CD14-positive monocyte (primary cell): ENCODE measurements at regions of chr19 and their contacts with region 1.

Region 1: GRCh38 chr19:10403137-10404021 is at the start of gene CDC37:
- DNase-seq: peak; percentile 97 to 98 (median 98)
- H3K4me3 ChIP-seq: peak within 1 kb of the TSS; percentile 91 to 98 (median 92)
- H3K4me3 Mint-ChIP-seq: peak within 1 kb of the TSS; percentile 94 to 95
- H3K27ac ChIP-seq: peak within 1 kb of the TSS; percentile 73 to 89
- H3K27ac Mint-ChIP-seq: peak within 1 kb of the TSS; percentile 92 to 99 (median 97)
- H3K4me1 ChIP-seq: peaks cover 74 to 81% of the 10 kb centered on the region in 2 donors
- H3K4me1 Mint-ChIP-seq: peaks cover 67% of the 10 kb centered on the region
- H3K27me3 ChIP-seq: peaks cover 3 to 15% of the 10 kb centered on the region in 2 donors
- H3K27me3 Mint-ChIP-seq: peaks cover 15 to 23% (median 17%) of the 10 kb centered on the region in 3 donors
- CTCF ChIP-seq: no peak
- polyA plus RNA-seq, gene CDC37: 49.3 to 575 (median 54.9) TPM

Region 2: GRCh38 chr19:10126213-10126639 is 277.2 kb before region 1 on chr19:
- intact Hi-C with region 1: no loop called
- DNase-seq: peak; percentile 77 to 89 (median 84)
- H3K4me3 ChIP-seq: peak overlapping the region in 1 of 3 experiments; percentile 27
- H3K4me3 Mint-ChIP-seq: peak overlapping the region in 1 of 2 donors; percentile 30
- H3K27ac ChIP-seq: peak overlapping the region; percentile 83 to 84
- H3K27ac Mint-ChIP-seq: peak overlapping the region; percentile 86 to 97 (median 93)
- H3K4me1 ChIP-seq: peaks cover 39 to 47% of the 10 kb centered on the region in 2 donors
- H3K4me1 Mint-ChIP-seq: peaks cover 23% of the 10 kb centered on the region
- H3K27me3 ChIP-seq: no peaks in the 10 kb centered on the region
- H3K27me3 Mint-ChIP-seq: no peaks in the 10 kb centered on the region
- CTCF ChIP-seq: no peak

Region 3: DNA sequence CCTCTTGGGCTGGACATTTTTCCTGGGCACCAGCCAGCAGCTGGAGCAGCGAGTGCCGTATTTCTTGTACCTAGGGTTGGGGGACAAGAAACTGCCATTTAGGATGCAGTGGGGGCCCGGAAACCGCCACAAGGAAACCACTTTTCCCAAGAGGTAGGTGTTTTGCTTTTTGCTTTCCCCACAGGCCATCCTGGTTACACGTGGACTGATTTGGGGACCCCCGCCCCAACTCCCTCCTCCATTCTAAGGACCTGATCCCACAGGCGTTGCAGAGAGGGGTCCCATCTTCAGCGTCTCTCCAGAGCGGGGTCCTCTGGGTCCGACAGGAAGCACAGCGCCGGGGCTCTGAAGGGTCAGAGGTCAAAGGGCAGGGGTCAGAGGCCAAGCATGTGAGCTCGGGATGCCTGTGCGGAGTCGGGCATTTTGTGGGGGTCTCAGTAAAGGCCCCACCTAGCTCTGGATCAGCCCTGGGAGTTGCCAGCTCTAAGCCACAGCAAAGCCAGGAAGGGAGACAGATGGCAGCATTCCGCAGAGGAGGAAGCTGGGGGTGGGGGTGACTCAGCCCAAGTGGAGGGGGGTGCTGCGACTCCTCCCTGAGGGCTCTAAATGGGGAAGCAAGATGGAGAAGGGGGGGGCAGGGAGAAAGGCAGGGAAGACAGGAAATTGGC is 98.1 kb before region 1 on chr19:
- intact Hi-C with region 1: no loop called
- DNase-seq: peak; percentile 79 to 92 (median 84)
- H3K4me3 ChIP-seq: peak overlapping the region; percentile 0 to 68 (median 25)
- H3K4me3 Mint-ChIP-seq: peak overlapping the region; percentile 58 to 81
- H3K27ac ChIP-seq: peak overlapping the region; percentile 55 to 92
- H3K27ac Mint-ChIP-seq: peak overlapping the region; percentile 89 to 97 (median 93)
- H3K4me1 ChIP-seq: peaks cover 32 to 41% of the 10 kb centered on the region in 2 donors
- H3K4me1 Mint-ChIP-seq: peaks cover 32% of the 10 kb centered on the region
- H3K27me3 ChIP-seq: no peaks in the 10 kb centered on the region
- H3K27me3 Mint-ChIP-seq: peaks cover 0 to 12% (median 4%) of the 10 kb centered on the region in 3 donors
- CTCF ChIP-seq: no peak

Region 4: GRCh38 chr19:10332955-10333757 is 70.2 kb before region 1 on chr19 and contains the start of gene RAVER1:
- intact Hi-C with region 1: no loop called
- DNase-seq: peak; percentile 97 to 98 (median 98)
- H3K4me3 ChIP-seq: peak within 1 kb of the TSS; percentile 76 to 96 (median 87)
- H3K4me3 Mint-ChIP-seq: peak within 1 kb of the TSS; percentile 94
- H3K27ac ChIP-seq: peak within 1 kb of the TSS; percentile 74 to 85
- H3K27ac Mint-ChIP-seq: peak within 1 kb of the TSS; percentile 93 to 98 (median 96)
- H3K4me1 ChIP-seq: peaks cover 31 to 46% of the 10 kb centered on the region in 2 donors
- H3K4me1 Mint-ChIP-seq: peaks cover 33% of the 10 kb centered on the region
- H3K27me3 ChIP-seq: no peaks in the 10 kb centered on the region
- H3K27me3 Mint-ChIP-seq: no peaks in the 10 kb centered on the region
- CTCF ChIP-seq: no peak
- polyA plus RNA-seq, gene RAVER1: 6.0 to 20.7 (median 9.0) TPM

Region 5: DNA sequence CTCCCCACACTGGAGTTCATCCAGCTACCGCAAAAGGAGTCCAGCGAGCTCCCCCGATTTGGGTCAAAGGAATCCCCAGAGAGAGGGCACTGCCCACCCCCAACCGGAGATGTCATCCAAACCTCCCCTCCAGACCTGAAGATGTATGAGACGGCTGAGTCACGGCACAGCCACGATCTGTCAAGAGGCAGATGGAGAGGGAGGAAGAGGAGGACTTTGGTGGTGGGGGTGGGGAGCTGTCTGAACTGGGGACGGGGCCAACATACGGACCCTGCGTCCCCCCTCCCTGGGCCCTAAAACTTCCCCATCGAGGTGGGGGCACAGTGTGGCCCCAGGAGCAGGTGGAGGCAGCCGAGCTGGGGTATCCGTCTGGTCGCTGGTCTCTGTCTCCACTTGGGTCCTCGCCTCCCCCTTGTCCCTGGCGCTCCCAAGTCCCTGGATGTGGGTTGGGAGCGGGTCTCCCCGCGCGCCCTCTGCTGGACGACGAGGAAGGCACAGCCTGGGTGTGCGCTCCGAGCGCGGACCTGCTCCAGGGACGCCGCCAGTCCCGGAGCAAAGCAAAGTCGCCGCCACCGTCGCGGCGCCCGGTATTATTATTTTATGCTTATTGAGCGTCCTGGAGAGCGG is 20.7 kb after region 1 on chr19:
- intact Hi-C with region 1: loop called (anchors 2 kb)
- DNase-seq: peak; percentile 83 to 94 (median 85)
- H3K4me3 ChIP-seq: peak overlapping the region; percentile 27 to 71 (median 35)
- H3K4me3 Mint-ChIP-seq: peak overlapping the region; percentile 81 to 90
- H3K27ac ChIP-seq: peak overlapping the region; percentile 60 to 84
- H3K27ac Mint-ChIP-seq: peak overlapping the region; percentile 92 to 99 (median 97)
- H3K4me1 ChIP-seq: peaks cover 87 to 96% of the 10 kb centered on the region in 2 donors
- H3K4me1 Mint-ChIP-seq: peaks cover 89% of the 10 kb centered on the region
- H3K27me3 ChIP-seq: peaks cover 25 to 39% of the 10 kb centered on the region in 2 donors
- H3K27me3 Mint-ChIP-seq: peaks cover 48 to 75% (median 59%) of the 10 kb centered on the region in 3 donors
- CTCF ChIP-seq: peak; percentile 91

Region 6: GRCh38 chr19:10431943-10432735 is 28.8 kb after region 1 on chr19:
- intact Hi-C with region 1: loop called (anchors 1 to 5 kb)
- DNase-seq: peak; percentile 52 to 74 (median 69)
- H3K4me3 ChIP-seq: peak overlapping the region; percentile 43 to 77 (median 51)
- H3K4me3 Mint-ChIP-seq: peak overlapping the region; percentile 87 to 96
- H3K27ac ChIP-seq: peak overlapping the region; percentile 62 to 78
- H3K27ac Mint-ChIP-seq: peak overlapping the region; percentile 88 to 98 (median 96)
- H3K4me1 ChIP-seq: peaks cover 41 to 50% of the 10 kb centered on the region in 2 donors
- H3K4me1 Mint-ChIP-seq: peaks cover 60% of the 10 kb centered on the region
- H3K27me3 ChIP-seq: peaks cover 3 to 33% of the 10 kb centered on the region in 2 donors
- H3K27me3 Mint-ChIP-seq: peaks cover 40 to 60% (median 51%) of the 10 kb centered on the region in 3 donors
- CTCF ChIP-seq: no peak

Region 7: DNA sequence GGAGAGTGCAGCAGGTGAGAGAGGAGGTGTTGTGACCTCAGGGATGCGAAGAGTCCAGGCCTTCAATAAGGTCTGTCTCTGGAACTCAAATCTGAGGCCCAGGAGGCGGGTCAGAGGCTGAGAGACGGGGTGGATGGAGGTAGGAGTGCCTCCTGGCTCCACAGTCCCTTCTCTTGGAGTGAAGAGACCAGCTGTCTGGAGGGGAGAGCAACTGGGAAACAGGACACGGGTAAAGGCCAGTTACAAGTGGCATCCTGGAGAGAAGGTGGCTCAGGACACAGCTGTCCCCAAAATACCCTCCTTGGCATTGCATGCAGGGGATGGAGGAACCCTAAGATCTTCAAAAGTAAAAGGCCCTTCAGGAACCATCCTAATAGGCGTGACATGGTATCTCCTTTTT is 36.2 kb after region 1 on chr19:
- intact Hi-C with region 1: loop called (anchors 1 to 5 kb)
- DNase-seq: no peak
- H3K4me3 ChIP-seq: no peak overlapping the region
- H3K4me3 Mint-ChIP-seq: no peak overlapping the region
- H3K27ac ChIP-seq: no peak overlapping the region
- H3K27ac Mint-ChIP-seq: no peak overlapping the region
- H3K4me1 ChIP-seq: no peaks in the 10 kb centered on the region
- H3K4me1 Mint-ChIP-seq: peaks cover 8% of the 10 kb centered on the region
- H3K27me3 ChIP-seq: no peaks in the 10 kb centered on the region
- H3K27me3 Mint-ChIP-seq: peaks cover 7 to 17% (median 7%) of the 10 kb centered on the region in 3 donors
- CTCF ChIP-seq: no peak

Region 8: GRCh38 chr19:10471909-10472308 is 68.5 kb after region 1 on chr19:
- intact Hi-C with region 1: no loop called
- DNase-seq: peak in 1 of 3 donors; percentile 10
- H3K4me3 ChIP-seq: no peak overlapping the region
- H3K4me3 Mint-ChIP-seq: no peak overlapping the region
- H3K27ac ChIP-seq: no peak overlapping the region
- H3K27ac Mint-ChIP-seq: no peak overlapping the region
- H3K4me1 ChIP-seq: no peaks in the 10 kb centered on the region
- H3K4me1 Mint-ChIP-seq: no peaks in the 10 kb centered on the region
- H3K27me3 ChIP-seq: no peaks in the 10 kb centered on the region
- H3K27me3 Mint-ChIP-seq: peaks cover 1 to 13% (median 2%) of the 10 kb centered on the region in 3 donors
- CTCF ChIP-seq: peak; percentile 39